ENCODE measurements at regions of chr16 and their contacts with region 1.

Region 1: GRCh38 chr16:61313931-61314330 is 722.3 kb downstream of the CDH8 start:
- DNase-seq: no peak
- H3K4me3 ChIP-seq: no peak overlapping the region
- H3K27ac ChIP-seq: no peak overlapping the region
- H3K4me1 ChIP-seq: no peaks in the 10 kb centered on the region
- H3K27me3 ChIP-seq: no peaks in the 10 kb centered on the region
- CTCF ChIP-seq: no peak
- EP300 ChIP-seq: no peak
- POLR2A ChIP-seq: no peak

Region 2: GRCh38 chr16:61370564-61370963 is 56.6 kb after region 1 on chr16:
- in situ Hi-C with region 1: no loop called
- intact Hi-C with region 1: loop called (anchors 10 kb)
- DNase-seq: no peak
- H3K4me3 ChIP-seq: no peak overlapping the region
- H3K27ac ChIP-seq: no peak overlapping the region
- H3K4me1 ChIP-seq: no peaks in the 10 kb centered on the region
- H3K27me3 ChIP-seq: no peaks in the 10 kb centered on the region
- CTCF ChIP-seq: no peak
- EP300 ChIP-seq: no peak
- POLR2A ChIP-seq: no peak

Region 3: DNA sequence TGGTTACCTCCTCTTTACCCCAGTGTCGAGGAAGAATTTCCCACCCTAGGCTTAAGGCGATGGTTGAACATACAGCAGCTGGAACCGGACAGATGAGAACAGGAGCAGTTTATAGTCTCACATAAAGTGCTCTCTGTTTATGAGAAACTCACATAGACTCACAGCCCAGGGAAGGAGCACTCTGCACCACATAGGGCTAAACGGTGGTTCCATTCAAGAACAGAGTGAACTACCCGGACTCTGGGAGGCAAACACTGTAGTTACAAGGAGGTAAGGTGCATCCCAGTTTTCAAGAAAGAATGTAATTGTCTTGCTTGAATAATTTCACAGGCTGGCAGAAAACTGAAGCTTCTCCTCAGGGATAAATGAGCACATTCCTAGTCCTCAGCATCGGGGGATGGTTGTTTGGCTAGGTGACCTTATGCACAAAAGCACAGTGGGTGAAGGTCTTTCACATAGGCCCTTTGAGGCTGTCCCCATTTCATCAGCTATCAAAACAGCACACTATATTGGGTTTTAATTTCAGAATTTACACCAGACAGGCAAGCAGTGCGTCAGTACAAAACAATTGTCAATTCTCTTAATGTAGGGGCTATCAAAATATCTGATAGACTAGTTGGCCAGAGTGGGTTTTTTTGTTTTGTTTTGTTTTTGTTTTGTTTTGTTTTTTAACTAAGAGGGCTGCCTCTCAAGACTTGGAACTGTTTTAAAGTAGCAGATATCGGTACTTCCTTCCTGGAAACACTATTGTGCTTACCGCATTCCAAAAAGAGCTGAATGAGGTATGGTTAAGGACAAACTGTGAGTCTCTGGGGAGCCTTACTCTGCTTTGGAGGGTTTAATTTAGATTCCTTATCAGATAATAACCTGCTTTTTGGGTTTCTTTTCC is 1640.5 kb after region 1 on chr16:
- in situ Hi-C with region 1: no loop called
- intact Hi-C with region 1: loop called (anchors 10 kb)
- DNase-seq: no peak
- H3K4me3 ChIP-seq: no peak overlapping the region
- H3K27ac ChIP-seq: no peak overlapping the region
- H3K4me1 ChIP-seq: no peaks in the 10 kb centered on the region
- H3K27me3 ChIP-seq: no peaks in the 10 kb centered on the region
- CTCF ChIP-seq: no peak
- EP300 ChIP-seq: no peak
- POLR2A ChIP-seq: no peak

Measured in transverse colon (tissue), 4 donors.